ENCODE measurements at regions of chr20 and their contacts with region 1.

Region 1: DNA sequence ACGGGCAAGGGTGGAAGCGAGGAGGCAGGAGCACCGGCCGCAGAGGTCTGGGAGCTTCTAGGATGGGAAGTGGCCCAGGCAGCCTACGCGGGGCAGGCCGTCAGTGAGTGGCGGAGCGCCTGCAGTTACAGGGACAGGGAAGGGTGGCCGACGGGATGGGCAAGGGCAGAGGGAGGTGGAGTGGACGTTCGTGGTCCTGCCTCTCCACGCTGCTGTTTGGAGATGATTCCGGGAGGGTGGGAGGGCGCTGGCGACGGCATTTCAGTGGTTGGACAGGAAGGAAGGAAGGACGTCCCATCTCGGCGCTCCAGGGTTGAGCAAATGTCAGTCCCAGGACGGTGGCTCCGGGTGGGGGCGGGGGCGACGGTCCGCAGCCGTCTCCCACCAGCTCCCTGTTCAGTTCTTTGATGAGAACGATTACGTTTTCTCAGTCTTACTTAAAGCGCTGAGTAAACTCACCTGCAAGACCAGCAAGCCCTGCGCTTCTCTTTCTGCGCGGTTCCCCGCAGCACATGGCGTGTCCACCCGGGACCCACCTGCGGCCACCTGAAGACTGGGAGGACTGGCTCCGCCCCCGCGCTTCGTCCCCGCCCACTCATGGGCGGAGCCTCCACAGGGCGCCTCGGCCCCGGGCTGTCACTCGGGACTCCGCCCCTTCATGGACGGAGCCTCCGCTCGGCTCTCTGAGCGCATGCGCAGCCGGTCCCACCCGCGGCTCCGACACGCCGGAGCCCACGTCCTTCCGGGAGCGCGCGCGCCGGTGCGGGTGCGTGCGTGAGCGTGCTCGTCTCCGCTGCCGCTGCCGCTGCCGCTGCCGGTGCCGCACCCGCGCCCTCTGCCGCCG is at the start of gene DNAJC5:
- DNase-seq: peak; percentile 93 to 99 (median 97)
- ATAC-seq: peak; percentile 92
- H3K4me3 ChIP-seq: peak within 1 kb of the TSS; percentile 46 to 66
- H3K4me3 Mint-ChIP-seq: peak within 1 kb of the TSS; percentile 95
- H3K27ac ChIP-seq: peak within 1 kb of the TSS; percentile 55 to 65
- H3K27ac Mint-ChIP-seq: peak within 1 kb of the TSS; percentile 96
- H3K4me1 ChIP-seq: peaks cover 41% of the 10 kb centered on the region
- H3K4me1 Mint-ChIP-seq: peaks cover 44% of the 10 kb centered on the region
- H3K27me3 ChIP-seq: no peaks in the 10 kb centered on the region
- H3K27me3 Mint-ChIP-seq: no peaks in the 10 kb centered on the region
- CTCF ChIP-seq: no peak
- total RNA-seq, gene DNAJC5: 24.3 TPM

Region 2: DNA sequence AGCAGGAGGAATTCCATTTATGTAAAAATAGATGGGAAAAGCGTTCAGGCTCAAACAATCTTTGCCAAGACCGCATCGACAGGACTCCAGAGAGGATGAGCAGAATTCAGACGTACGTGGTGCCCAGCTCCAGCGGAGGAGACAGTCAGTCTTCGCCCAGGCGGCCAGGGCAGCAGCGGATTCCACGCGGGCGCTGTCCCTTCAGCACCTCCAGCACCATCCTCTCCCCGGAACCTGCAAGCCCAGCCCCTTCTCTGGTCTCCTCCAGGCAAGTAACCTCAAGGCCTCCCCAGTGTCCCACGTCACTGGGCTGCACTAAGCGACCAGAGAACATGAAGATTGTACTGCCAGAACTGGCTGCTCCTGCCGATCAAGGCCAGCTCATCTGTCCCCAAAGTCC is 419.4 kb before region 1 on chr20:
- CTCF ChIA-PET with region 1: no interaction called
- POLR2A ChIA-PET with region 1: no interaction called
- intact Hi-C with region 1: no loop called
- DNase-seq: no peak
- ATAC-seq: peak; percentile 36
- H3K4me3 ChIP-seq: no peak overlapping the region
- H3K4me3 Mint-ChIP-seq: no peak overlapping the region
- H3K27ac ChIP-seq: no peak overlapping the region
- H3K27ac Mint-ChIP-seq: no peak overlapping the region
- H3K4me1 ChIP-seq: peaks cover 8% of the 10 kb centered on the region
- H3K4me1 Mint-ChIP-seq: peaks cover 7% of the 10 kb centered on the region
- H3K27me3 ChIP-seq: peaks cover 13 to 14% of the 10 kb centered on the region in 2 experiments
- H3K27me3 Mint-ChIP-seq: peaks cover 28% of the 10 kb centered on the region
- CTCF ChIP-seq: no peak

Region 3: GRCh38 chr20:63627129-63627750 is 267.3 kb before region 1 on chr20:
- CTCF ChIA-PET with region 1: no interaction called
- POLR2A ChIA-PET with region 1: no interaction called
- intact Hi-C with region 1: loop called in 1 of 2 experiments (anchors 10 kb)
- DNase-seq: peak; percentile 90 to 97 (median 94)
- ATAC-seq: peak; percentile 77
- H3K4me3 ChIP-seq: peak overlapping the region; percentile 91 to 100
- H3K4me3 Mint-ChIP-seq: peak overlapping the region; percentile 97
- H3K27ac ChIP-seq: peak overlapping the region; percentile 81 to 91
- H3K27ac Mint-ChIP-seq: peak overlapping the region; percentile 93
- H3K4me1 ChIP-seq: peaks cover 39% of the 10 kb centered on the region
- H3K4me1 Mint-ChIP-seq: peaks cover 43% of the 10 kb centered on the region
- H3K27me3 ChIP-seq: no peaks in the 10 kb centered on the region
- H3K27me3 Mint-ChIP-seq: no peaks in the 10 kb centered on the region
- CTCF ChIP-seq: no peak

Region 4: GRCh38 chr20:63917811-63918210 is 23.2 kb after region 1 on chr20:
- CTCF ChIA-PET with region 1: no interaction called
- POLR2A ChIA-PET with region 1: no interaction called
- intact Hi-C with region 1: no loop called
- DNase-seq: no peak
- ATAC-seq: no peak
- H3K4me3 ChIP-seq: no peak overlapping the region
- H3K4me3 Mint-ChIP-seq: no peak overlapping the region
- H3K27ac ChIP-seq: no peak overlapping the region
- H3K27ac Mint-ChIP-seq: peak overlapping the region; percentile 20
- H3K4me1 ChIP-seq: no peaks in the 10 kb centered on the region
- H3K4me1 Mint-ChIP-seq: peaks cover 16% of the 10 kb centered on the region
- H3K27me3 ChIP-seq: no peaks in the 10 kb centered on the region
- H3K27me3 Mint-ChIP-seq: no peaks in the 10 kb centered on the region
- CTCF ChIP-seq: no peak

Region 5: DNA sequence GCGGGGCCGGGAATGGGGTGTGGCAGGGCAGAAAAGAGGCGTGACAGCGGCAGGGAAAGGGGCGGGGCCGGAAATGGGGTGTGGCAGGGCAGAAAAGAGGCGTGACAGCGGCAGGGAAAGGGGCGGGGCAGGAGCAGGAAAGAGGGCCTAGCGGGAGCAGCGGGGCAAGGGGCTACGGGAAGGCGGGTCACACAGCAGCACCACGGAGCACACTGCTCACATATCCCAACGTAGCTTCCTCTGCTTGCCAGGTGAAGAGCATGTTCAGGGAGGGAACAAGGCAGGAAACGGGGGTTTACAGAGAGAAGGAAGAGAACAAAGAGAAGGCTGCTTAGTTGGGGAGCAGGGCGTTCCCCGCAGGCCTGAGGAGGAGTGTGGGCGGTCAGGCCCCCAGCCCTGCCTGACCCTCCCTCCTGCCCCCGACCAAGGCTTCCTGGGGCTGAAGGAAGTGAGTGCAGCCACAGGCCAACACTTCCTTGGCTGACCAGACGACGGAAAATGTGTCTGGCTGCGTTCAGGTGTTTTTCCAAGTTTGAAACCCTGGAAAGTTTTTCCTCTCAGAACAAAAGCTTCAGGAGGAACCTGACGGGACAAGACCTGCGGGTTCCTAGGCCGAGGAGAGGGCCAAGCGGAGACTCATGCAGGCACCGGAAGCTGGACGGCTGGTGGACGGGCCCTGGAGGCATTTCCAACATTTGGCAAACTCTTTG is 47.8 kb after region 1 on chr20:
- CTCF ChIA-PET with region 1: no interaction called
- POLR2A ChIA-PET with region 1: no interaction called
- intact Hi-C with region 1: loop called (anchors 2 kb)
- DNase-seq: peak in 3 of 9 experiments; percentile 45 to 59 (median 56)
- ATAC-seq: no peak
- H3K4me3 ChIP-seq: no peak overlapping the region
- H3K4me3 Mint-ChIP-seq: peak overlapping the region; percentile 57
- H3K27ac ChIP-seq: peak overlapping the region; percentile 27 to 58
- H3K27ac Mint-ChIP-seq: peak overlapping the region; percentile 45
- H3K4me1 ChIP-seq: peaks cover 23% of the 10 kb centered on the region
- H3K4me1 Mint-ChIP-seq: peaks cover 23% of the 10 kb centered on the region
- H3K27me3 ChIP-seq: no peaks in the 10 kb centered on the region
- H3K27me3 Mint-ChIP-seq: no peaks in the 10 kb centered on the region
- CTCF ChIP-seq: no peak

Measured in CD8-positive, alpha-beta T cell (primary cell).